Posterior vena cava (tissue), 2 donors: ENCODE measurements at regions of chr19 and their contacts with region 1.

Region 1: GRCh38 chr19:46697204-46697960 is 19.5 kb downstream of the PRKD2 start:
- DNase-seq: peak; percentile 96

Region 2: GRCh38 chr19:46678110-46678732 is 19.2 kb before region 1 on chr19:
- intact Hi-C with region 1: no loop called
- DNase-seq: no peak

Region 3: GRCh38 chr19:46834121-46834520 is 136.7 kb after region 1 on chr19:
- intact Hi-C with region 1: loop called in 1 of 2 experiments (anchors 5 kb)
- DNase-seq: no peak